Sciatic nerve (tissue), 2 donors: ENCODE measurements at regions of chr1 and their contacts with region 1.

Region 1: GRCh38 chr1:153717330-153717729 is 10.5 kb upstream of the INTS3 start:
- DNase-seq: no peak
- ATAC-seq: no peak

Region 2: GRCh38 chr1:153228491-153228890 is 488.8 kb before region 1 on chr1:
- intact Hi-C with region 1: loop called (anchors 5 kb)
- DNase-seq: no peak
- ATAC-seq: no peak

Region 3: DNA sequence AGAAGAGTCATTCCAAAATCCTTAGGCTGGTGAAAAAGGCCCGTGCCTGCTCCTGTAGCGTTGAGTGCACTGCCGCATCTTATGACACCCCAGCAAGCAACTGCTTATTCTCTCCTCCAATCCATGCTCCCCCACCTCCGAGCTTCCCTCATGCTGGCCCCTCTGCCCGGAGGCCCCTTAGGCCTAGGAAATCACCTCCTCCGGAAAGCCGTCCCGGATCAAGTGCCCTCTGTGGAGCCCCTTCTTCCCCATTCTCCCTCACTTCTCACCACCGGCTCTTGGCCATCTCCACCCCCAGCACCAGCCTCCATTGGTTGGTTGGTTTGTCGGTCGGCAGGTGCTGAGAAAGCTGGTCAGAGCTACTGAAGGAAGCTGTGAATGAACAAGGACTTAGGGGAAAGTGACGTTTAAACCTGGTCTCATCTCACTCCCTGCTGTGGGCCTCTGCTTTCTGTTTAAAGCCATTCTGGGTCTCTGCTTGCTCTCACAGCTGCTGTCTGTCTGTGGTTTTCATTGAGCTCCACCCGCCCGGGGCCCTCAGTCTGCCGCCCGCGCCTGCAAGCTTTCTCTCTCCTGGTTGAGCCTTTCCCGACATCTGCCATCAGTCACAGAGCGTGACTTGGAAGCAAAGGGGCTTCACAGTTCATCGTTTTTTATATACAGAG is 1030.5 kb after region 1 on chr1:
- intact Hi-C with region 1: no loop called
- DNase-seq: no peak
- ATAC-seq: no peak